Aorta (tissue), 5 donors: ENCODE measurements at regions of chr2 and their contacts with region 1.

Region 1: DNA sequence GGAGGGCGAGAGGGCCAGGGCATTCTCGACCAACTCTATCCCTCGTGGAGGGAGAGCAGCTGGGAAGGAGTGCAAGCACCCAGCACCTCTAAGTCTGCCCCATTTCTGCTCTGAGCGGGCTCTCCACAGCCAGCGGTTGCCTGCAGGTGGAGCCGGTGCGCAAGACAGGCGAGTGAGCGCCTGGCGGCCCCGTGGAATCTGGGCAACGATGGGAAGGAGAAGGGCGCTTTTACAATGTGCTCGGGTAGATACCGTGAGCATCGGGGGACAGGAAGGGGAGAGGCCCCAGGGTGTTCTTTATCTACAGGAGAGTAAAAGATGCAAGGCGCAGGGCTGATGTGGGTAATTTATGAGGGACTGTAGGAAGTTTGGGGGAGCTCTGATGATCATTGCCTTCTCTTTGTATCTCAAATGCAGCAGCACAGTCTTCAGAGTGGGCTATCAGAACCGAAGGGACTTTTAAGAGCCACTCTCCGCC is 867 bp upstream of the TTL start:
- DNase-seq: peak; percentile 89 to 94
- ATAC-seq: peak; percentile 92
- H3K4me3 ChIP-seq: peak overlapping the region; percentile 92 to 95
- H3K27ac ChIP-seq: peak overlapping the region in 1 of 2 donors; percentile 30
- H3K4me1 ChIP-seq: no peaks in the 10 kb centered on the region
- H3K27me3 ChIP-seq: no peaks in the 10 kb centered on the region

Region 2: GRCh38 chr2:112542123-112542983 is 61.3 kb after region 1 on chr2 and contains the start of gene POLR1B:
- intact Hi-C with region 1: loop called (anchors 2 kb)
- DNase-seq: peak; percentile 90 to 93
- ATAC-seq: peak; percentile 96
- H3K4me3 ChIP-seq: peak within 1 kb of the TSS; percentile 36 to 78
- H3K27ac ChIP-seq: peak within 1 kb of the TSS; percentile 51 to 78
- H3K4me1 ChIP-seq: peaks cover 0 to 5% of the 10 kb centered on the region in 2 donors
- H3K27me3 ChIP-seq: no peaks in the 10 kb centered on the region
- total RNA-seq, gene POLR1B: 9.4 to 13.5 TPM